Activated T-helper 2 cell treated with anti-CD3 and anti-CD28 coated beads, Interferon-gamma antibody, Interleukin-2, Interleukin-4, amounts not matched to agents 10 μg/mL and 5 μg/mL and 100 μg/mL, durations not matched to agents 14 hours and 24 hours and 36 hours (primary cell): ENCODE measurements at regions of chr19 and their contacts with region 1.

Region 1: GRCh38 chr19:21328885-21329605 is at the start of gene ZNF708:
- DNase-seq: peak; percentile 78
- H3K4me3 Mint-ChIP-seq: peak within 1 kb of the TSS; percentile 99
- H3K27ac Mint-ChIP-seq: peak within 1 kb of the TSS; percentile 99
- H3K4me1 Mint-ChIP-seq: peaks cover 11% of the 10 kb centered on the region
- H3K27me3 Mint-ChIP-seq: no peaks in the 10 kb centered on the region
- total RNA-seq, gene ZNF708: 11.0 and 12.1 TPM in 2 replicates

Region 2: GRCh38 chr19:19865739-19866481 is 1463.1 kb before region 1 on chr19 and contains the start of gene ZNF253:
- intact Hi-C with region 1: loop called (anchors 2 kb)
- DNase-seq: peak; percentile 92
- H3K4me3 Mint-ChIP-seq: peak within 1 kb of the TSS; percentile 93
- H3K27ac Mint-ChIP-seq: peak within 1 kb of the TSS; percentile 97
- H3K4me1 Mint-ChIP-seq: peaks cover 7% of the 10 kb centered on the region
- H3K27me3 Mint-ChIP-seq: no peaks in the 10 kb centered on the region
- total RNA-seq, gene ZNF253: 8.6 and 9.9 TPM in 2 replicates

Region 3: GRCh38 chr19:20565321-20566018 is 763.6 kb before region 1 on chr19 and contains the start of gene ZNF737:
- intact Hi-C with region 1: loop called (anchors 10 kb)
- DNase-seq: peak; percentile 86
- H3K4me3 Mint-ChIP-seq: peak within 1 kb of the TSS; percentile 97
- H3K27ac Mint-ChIP-seq: peak within 1 kb of the TSS; percentile 97
- H3K4me1 Mint-ChIP-seq: peaks cover 12% of the 10 kb centered on the region
- H3K27me3 Mint-ChIP-seq: no peaks in the 10 kb centered on the region
- total RNA-seq, gene ZNF737: 7.0 TPM in 2 replicates

Region 4: GRCh38 chr19:21358768-21359451 is 29.9 kb after region 1 on chr19 and contains the start of gene ZNF738:
- intact Hi-C with region 1: loop called (anchors 1 kb)
- DNase-seq: peak; percentile 82
- H3K4me3 Mint-ChIP-seq: peak within 1 kb of the TSS; percentile 99
- H3K27ac Mint-ChIP-seq: peak within 1 kb of the TSS; percentile 98
- H3K4me1 Mint-ChIP-seq: peaks cover 6% of the 10 kb centered on the region
- H3K27me3 Mint-ChIP-seq: no peaks in the 10 kb centered on the region
- total RNA-seq, gene ZNF738: 12.5 and 13.7 TPM in 2 replicates

Region 5: DNA sequence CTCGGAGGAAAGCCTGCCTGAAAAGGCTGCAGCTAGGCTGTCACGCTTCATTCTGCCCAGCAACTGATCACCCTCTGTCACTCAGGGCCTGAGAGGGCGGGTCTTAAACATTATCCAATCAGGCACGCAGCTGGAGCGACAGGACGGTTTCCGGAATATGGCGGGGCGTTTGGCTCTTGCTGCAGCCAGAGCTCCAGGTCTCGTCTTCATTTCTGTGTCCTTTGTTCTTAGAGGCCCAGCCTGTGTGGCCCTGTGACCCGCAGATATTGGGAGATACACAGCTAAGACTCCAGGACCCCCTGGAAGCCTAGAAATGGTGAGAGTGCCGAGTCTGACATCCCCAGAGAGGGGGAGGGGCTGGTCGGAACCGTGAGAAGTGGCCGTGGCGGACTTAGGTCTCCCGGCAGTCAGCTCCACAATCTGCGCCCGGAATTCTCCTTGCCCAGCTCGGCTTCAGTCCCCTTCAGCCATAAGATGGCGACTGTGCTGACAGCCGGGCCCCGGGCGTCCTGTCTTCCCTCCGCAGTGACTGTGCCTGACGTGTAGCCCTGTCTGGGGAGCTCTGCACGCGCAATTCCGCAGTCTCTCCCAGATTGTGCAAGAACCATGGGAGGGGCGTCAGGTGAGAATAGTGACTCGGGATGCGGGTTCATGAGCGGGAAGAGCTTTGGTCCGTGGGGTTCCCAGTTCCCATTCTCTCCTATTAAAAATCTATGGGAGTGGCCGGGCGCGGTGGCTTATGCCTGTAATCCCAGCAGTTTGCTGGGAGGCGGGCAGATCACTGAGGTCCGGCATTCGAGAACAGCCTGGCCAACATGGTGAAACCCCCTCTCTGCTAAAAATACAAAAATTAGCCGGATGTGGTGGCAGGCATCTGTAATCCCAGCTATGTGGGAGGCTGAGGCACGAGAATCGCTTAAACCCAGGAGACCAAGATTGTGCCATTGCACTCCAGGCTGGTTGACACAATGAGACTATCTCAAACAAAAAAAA is 176.7 kb after region 1 on chr19 and contains the start of gene ZNF429:
- intact Hi-C with region 1: loop called (anchors 1 kb)
- DNase-seq: peak; percentile 86
- H3K4me3 Mint-ChIP-seq: peak within 1 kb of the TSS; percentile 100
- H3K27ac Mint-ChIP-seq: peak within 1 kb of the TSS; percentile 95
- H3K4me1 Mint-ChIP-seq: peaks cover 12% of the 10 kb centered on the region
- H3K27me3 Mint-ChIP-seq: no peaks in the 10 kb centered on the region
- total RNA-seq, gene ZNF429: 3.1 and 5.0 TPM in 2 replicates

Region 6: DNA sequence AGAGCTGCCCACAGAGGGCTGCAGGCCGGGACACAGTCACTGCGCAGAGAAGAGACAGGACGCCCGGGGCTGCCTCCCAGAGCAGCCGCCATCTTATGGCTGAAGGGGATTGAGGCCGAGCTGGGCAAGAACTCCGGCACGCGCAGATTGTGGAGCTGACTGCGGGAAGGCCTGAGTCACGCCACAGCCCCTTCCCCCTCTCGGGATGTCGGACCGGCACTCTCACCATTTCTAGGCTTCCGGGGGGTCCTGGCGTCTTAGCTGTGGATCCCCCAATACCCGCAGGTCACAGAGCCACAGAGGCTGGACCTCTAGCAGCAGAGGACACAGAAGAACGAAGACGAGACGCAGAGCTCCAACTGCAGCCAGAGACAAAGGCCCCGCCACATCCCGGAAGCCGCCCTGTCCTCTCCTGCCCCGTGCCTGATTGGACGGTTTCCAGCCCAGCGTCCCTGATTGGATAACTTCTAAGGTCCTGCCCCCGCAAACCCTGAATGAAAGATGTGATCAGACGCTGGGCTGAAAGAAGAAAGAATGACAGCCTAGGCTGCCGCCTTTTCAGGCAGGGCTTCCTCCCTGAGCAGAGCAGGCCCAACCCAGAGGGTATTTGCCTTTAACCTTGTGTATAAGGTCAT is 506.9 kb after region 1 on chr19 and contains the start of gene ZNF43:
- intact Hi-C with region 1: loop called (anchors 10 kb)
- DNase-seq: peak; percentile 89
- H3K4me3 Mint-ChIP-seq: peak within 1 kb of the TSS; percentile 94
- H3K27ac Mint-ChIP-seq: peak within 1 kb of the TSS; percentile 98
- H3K4me1 Mint-ChIP-seq: peaks cover 11% of the 10 kb centered on the region
- H3K27me3 Mint-ChIP-seq: no peaks in the 10 kb centered on the region
- total RNA-seq, gene ZNF43: 33.5 and 34.9 TPM in 2 replicates